ENCODE measurements at regions of chr5 and their contacts with region 1.

Region 1: GRCh38 chr5:1633605-1634336 is 110.0 kb upstream of the LPCAT1 start:
- DNase-seq: peak; percentile 88
- ATAC-seq: peak; percentile 93
- H3K4me3 ChIP-seq: peak overlapping the region in 4 of 5 experiments; percentile 77 to 98 (median 80)
- H3K4me3 Mint-ChIP-seq: peak overlapping the region; percentile 97
- H3K27ac ChIP-seq: peak overlapping the region; percentile 69 to 79
- H3K27ac Mint-ChIP-seq: peak overlapping the region; percentile 94
- H3K4me1 ChIP-seq: peaks cover 0 to 5% of the 10 kb centered on the region in 2 donors
- H3K4me1 Mint-ChIP-seq: peaks cover 30% of the 10 kb centered on the region
- H3K27me3 ChIP-seq: no peaks in the 10 kb centered on the region
- H3K27me3 Mint-ChIP-seq: no peaks in the 10 kb centered on the region
- CTCF ChIP-seq: no peak

Region 2: DNA sequence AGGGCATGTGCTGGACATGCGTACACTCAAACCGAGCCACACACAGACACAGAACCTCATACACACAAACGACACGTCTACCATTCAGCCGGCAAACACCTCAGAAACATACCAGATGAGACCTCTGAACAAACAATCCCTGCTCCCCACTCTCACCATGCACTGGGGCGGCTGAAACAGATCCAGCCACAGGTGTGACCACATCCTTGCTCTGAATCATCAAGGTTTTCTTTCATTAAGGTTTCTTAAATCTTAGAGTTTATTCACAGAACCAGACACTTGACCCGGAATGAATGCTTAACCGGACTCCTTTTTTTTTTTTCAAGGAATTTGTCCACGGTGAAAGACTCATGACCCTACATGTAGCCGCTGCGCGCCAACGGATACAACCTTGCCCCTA is 365.1 kb before region 1 on chr5:
- CTCF ChIA-PET with region 1: no interaction called
- POLR2A ChIA-PET with region 1: no interaction called
- intact Hi-C with region 1: no loop called
- DNase-seq: no peak
- ATAC-seq: no peak
- H3K4me3 ChIP-seq: no peak overlapping the region
- H3K4me3 Mint-ChIP-seq: no peak overlapping the region
- H3K27ac ChIP-seq: no peak overlapping the region
- H3K27ac Mint-ChIP-seq: no peak overlapping the region
- H3K4me1 ChIP-seq: no peaks in the 10 kb centered on the region
- H3K4me1 Mint-ChIP-seq: no peaks in the 10 kb centered on the region
- H3K27me3 ChIP-seq: no peaks in the 10 kb centered on the region
- H3K27me3 Mint-ChIP-seq: no peaks in the 10 kb centered on the region
- CTCF ChIP-seq: no peak

Region 3: DNA sequence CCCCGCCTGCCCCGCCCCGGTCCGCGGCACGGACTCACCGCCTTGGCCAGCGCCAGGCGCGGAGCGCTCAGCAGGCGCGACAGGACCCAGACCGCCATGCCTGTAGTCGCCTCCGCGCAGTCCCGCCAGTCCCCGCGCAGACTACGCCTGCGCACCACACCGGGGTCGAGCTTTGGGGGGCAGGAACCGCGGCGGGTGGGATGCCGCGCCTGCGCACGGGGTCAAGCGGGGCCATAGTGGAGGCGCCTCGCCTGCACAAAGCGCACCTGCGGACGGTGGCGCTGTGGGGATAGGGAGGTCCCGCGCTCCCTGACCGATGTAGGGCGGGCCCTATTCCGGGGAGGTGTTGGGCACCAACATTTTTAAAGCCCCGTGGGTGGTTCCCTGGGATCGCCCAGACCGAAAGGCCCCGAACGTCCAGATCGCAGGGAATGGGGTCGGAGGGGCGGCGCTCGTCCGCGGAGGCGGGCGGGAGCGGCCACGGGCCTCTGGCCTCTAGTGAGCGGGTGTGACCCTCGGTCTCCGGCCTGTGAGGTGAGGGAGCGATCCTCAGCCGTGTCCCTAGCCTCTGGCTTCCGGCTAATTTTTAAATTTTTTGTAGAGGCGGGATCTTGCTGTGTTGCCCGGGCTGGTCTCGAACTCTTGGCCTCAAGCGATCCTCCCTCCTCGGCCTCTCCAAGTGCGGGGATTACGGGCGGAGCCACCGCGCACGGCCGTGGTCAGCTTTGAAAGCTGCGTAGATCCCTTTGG is 39.2 kb before region 1 on chr5:
- CTCF ChIA-PET with region 1: no interaction called
- POLR2A ChIA-PET with region 1: interaction called, 3 read pairs
- intact Hi-C with region 1: loop called (anchors 5 kb)
- DNase-seq: peak; percentile 92
- ATAC-seq: peak; percentile 93
- H3K4me3 ChIP-seq: peak overlapping the region; percentile 11 to 90 (median 78)
- H3K4me3 Mint-ChIP-seq: peak overlapping the region; percentile 86
- H3K27ac ChIP-seq: peak overlapping the region; percentile 68 to 72
- H3K27ac Mint-ChIP-seq: peak overlapping the region; percentile 85
- H3K4me1 ChIP-seq: peaks cover 0 to 12% of the 10 kb centered on the region in 2 donors
- H3K4me1 Mint-ChIP-seq: peaks cover 22% of the 10 kb centered on the region
- H3K27me3 ChIP-seq: no peaks in the 10 kb centered on the region
- H3K27me3 Mint-ChIP-seq: no peaks in the 10 kb centered on the region
- CTCF ChIP-seq: peak; percentile 57